HCT116 (cell line): ENCODE measurements at regions of chr9 and their contacts with region 1.

Region 1: DNA sequence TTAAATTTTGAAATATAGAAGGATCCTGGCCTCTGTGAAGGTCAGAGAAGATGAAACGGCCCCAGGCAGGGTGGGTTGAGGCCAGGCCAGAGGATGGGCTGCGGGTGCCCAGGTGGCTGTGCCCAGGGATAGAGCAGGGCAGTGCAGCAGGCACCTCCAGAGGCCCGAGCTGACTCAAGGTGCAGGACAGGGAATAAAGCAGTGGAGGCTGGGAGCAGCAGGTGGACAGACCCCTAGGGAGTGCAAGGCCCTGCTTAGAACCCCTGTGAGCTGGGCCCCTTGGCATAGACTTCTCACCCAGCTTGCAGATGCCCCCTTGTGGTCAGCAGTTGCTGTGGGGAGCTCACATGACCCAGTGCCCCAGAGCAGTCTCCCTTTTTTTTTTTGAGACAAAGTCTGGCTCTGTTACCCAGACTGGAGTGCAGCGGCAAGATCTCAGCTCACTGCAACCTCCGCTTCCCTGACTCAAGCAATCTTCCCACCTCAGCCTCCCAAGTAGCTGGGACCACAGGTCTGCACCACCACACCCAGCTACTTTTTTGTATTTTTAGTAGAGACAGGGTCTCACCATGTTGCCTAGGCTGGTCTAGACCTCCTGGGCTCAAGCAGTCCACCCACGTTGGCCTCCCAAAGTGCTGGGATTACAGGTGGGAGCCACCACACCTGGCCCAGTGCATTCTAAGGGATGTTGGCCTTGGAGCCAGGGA is 118.8 kb downstream of the WNK2 start:
- DNase-seq: peak; percentile 42
- ATAC-seq: peak; percentile 86
- H3K4me3 ChIP-seq: no peak overlapping the region
- H3K27ac ChIP-seq: no peak overlapping the region
- H3K4me1 ChIP-seq: no peaks in the 10 kb centered on the region
- H3K27me3 ChIP-seq: no peaks in the 10 kb centered on the region
- CTCF ChIP-seq: peak; percentile 74 to 84 (median 81)
- POLR2A ChIP-seq: no peak
- RAD21 ChIP-seq: peak; percentile 86

Region 2: GRCh38 chr9:92728831-92729734 is 573.6 kb before region 1 on chr9:
- CTCF ChIA-PET with region 1: no interaction called
- POLR2A ChIA-PET with region 1: no interaction called
- RAD21 ChIA-PET with region 1: no interaction called
- intact Hi-C with region 1: no loop called
- DNase-seq: no peak
- ATAC-seq: peak; percentile 73
- H3K4me3 ChIP-seq: no peak overlapping the region
- H3K27ac ChIP-seq: no peak overlapping the region
- H3K4me1 ChIP-seq: no peaks in the 10 kb centered on the region
- H3K27me3 ChIP-seq: no peaks in the 10 kb centered on the region
- CTCF ChIP-seq: peak in 2 of 3 experiments; percentile 28 to 39; a peak in 3 of 6 replicates
- POLR2A ChIP-seq: no peak
- RAD21 ChIP-seq: peak; percentile 22; the same call in 1 of the 2 replicates

Region 3: GRCh38 chr9:92954049-92954861 is 348.4 kb before region 1 on chr9:
- CTCF ChIA-PET with region 1: no interaction called
- POLR2A ChIA-PET with region 1: no interaction called
- RAD21 ChIA-PET with region 1: no interaction called
- intact Hi-C with region 1: loop called (anchors 2 kb)
- DNase-seq: peak; percentile 44
- ATAC-seq: peak; percentile 79
- H3K4me3 ChIP-seq: peak overlapping the region in 1 of 2 experiments; percentile 38; a peak in 2 of 4 replicates
- H3K27ac ChIP-seq: peak overlapping the region; percentile 27; the same call in 1 of the 2 replicates
- H3K4me1 ChIP-seq: peaks cover 15 to 24% of the 10 kb centered on the region in 2 experiments; a peak in 3 of 4 replicates
- H3K27me3 ChIP-seq: no peaks in the 10 kb centered on the region
- CTCF ChIP-seq: no peak
- POLR2A ChIP-seq: no peak
- RAD21 ChIP-seq: no peak

Region 4: DNA sequence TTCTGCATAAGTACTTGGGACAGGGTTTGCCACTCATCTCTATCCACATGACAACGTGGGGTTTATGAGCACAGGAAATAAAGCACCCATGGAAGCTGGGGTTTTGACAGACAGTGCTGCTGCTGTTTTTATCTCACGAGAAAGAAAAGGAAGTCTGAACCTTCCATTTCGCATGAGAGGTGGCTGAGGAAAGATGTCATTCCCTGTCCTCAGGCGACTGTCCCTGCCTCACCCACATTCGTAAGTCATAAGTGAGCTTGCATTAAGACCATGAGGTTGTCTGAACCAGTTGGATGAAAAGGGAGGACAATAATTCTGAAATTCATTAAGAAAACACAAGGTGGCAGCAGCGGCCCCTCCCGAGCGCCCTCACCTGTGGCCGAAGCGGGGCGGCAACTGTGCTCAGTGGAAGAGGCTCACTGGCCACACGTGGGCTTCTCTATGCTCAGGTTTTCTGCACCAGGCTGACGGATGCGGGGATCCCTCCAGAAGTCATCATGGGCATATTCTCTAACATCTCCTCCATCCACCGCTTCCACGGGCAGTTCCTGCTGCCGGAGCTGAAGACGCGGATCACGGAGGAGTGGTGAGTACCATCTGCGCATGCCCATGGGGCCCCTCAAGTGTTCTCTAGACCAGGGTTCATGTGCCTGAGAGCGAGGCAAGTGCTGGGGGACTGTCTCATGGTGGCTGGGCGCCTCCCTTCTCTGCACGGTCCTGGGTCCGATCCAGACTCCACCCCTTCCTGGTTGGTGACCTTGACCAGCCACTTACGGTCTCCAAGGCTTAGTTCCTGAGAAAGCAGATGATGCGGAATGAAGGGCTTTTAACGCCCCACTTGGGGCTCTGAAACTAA is 298.9 kb before region 1 on chr9:
- CTCF ChIA-PET with region 1: interaction called, 10 read pairs
- POLR2A ChIA-PET with region 1: no interaction called
- RAD21 ChIA-PET with region 1: no interaction called
- intact Hi-C with region 1: no loop called
- DNase-seq: peak; percentile 73
- ATAC-seq: peak; percentile 94
- H3K4me3 ChIP-seq: peak overlapping the region; percentile 49 to 60
- H3K27ac ChIP-seq: peak overlapping the region; percentile 47; the same call in 1 of the 2 replicates
- H3K4me1 ChIP-seq: peaks cover 10 to 18% of the 10 kb centered on the region in 2 experiments; a peak in 3 of 4 replicates
- H3K27me3 ChIP-seq: no peaks in the 10 kb centered on the region
- CTCF ChIP-seq: peak; percentile 67 to 97 (median 82)
- POLR2A ChIP-seq: no peak
- RAD21 ChIP-seq: peak; percentile 94

Region 5: GRCh38 chr9:93108291-93109041 is 194.2 kb before region 1 on chr9:
- CTCF ChIA-PET with region 1: interaction called, 13 read pairs
- POLR2A ChIA-PET with region 1: no interaction called
- RAD21 ChIA-PET with region 1: interaction called in 1 of 2 experiments, 4 read pairs
- intact Hi-C with region 1: loop called (anchors 2 kb)
- DNase-seq: no peak
- ATAC-seq: peak; percentile 51
- H3K4me3 ChIP-seq: no peak overlapping the region
- H3K27ac ChIP-seq: peak overlapping the region; percentile 23; the same call in 1 of the 2 replicates
- H3K4me1 ChIP-seq: peaks cover 0 to 18% of the 10 kb centered on the region in 2 experiments; a peak in 2 of 4 replicates
- H3K27me3 ChIP-seq: no peaks in the 10 kb centered on the region
- CTCF ChIP-seq: no peak
- POLR2A ChIP-seq: no peak
- RAD21 ChIP-seq: no peak

Region 6: GRCh38 chr9:93154315-93154903 is 148.3 kb before region 1 on chr9:
- CTCF ChIA-PET with region 1: interaction called, 10 read pairs
- POLR2A ChIA-PET with region 1: no interaction called
- RAD21 ChIA-PET with region 1: interaction called, 3 to 7 read pairs
- intact Hi-C with region 1: no loop called
- DNase-seq: no peak
- ATAC-seq: peak; percentile 89
- H3K4me3 ChIP-seq: no peak overlapping the region
- H3K27ac ChIP-seq: no peak overlapping the region
- H3K4me1 ChIP-seq: peaks cover 0 to 2% of the 10 kb centered on the region in 2 experiments; a peak in 3 of 4 replicates
- H3K27me3 ChIP-seq: no peaks in the 10 kb centered on the region
- CTCF ChIP-seq: peak; percentile 67 to 93 (median 93); a peak in 5 of 6 replicates
- POLR2A ChIP-seq: no peak
- RAD21 ChIP-seq: peak; percentile 70

Region 7: DNA sequence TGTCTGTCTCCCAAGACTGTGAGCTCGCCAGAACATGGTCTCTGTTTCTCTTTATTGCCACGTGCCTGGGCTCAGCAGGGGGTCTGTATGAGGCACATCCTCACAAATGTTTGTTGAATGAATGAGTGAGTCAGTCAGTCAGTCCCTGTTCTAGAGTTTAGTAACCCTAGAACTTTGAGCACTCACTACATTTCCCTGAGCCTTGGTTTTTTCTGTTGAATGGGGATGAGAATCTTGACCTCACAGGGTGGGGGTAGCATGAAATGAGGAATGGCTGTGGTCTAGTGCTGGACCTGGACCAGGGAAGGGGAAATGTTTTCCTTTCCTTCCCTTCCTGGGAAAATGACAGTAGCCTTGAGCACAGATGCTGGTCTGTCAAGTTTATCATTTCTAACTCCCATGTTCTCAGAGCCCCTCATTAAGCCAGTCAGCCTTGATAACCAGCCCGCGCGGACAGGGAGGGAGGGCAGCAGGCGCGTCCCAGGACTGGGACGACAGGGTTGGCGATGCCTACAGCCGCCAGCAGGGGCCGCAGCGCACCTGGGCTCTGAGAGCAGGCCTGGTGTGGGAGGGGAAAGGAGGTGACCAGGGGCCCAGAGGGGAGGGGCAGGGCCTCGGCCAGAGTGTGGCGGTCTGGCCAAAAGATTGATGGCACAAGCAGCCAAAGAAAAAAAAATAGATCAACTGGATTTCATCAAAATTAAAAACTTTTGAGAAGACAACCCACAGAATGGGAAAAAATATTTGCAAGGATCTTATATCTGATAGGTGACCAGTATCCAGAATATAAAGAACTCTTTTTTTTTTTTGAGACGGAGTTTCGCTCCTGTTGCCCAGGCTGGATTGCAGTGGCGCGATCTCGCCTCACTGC is 142.9 kb before region 1 on chr9:
- CTCF ChIA-PET with region 1: interaction called, 10 read pairs
- POLR2A ChIA-PET with region 1: no interaction called
- RAD21 ChIA-PET with region 1: interaction called in 1 of 2 experiments, 5 read pairs
- intact Hi-C with region 1: loop called (anchors 1 kb)
- DNase-seq: peak; percentile 67
- ATAC-seq: peak; percentile 100
- H3K4me3 ChIP-seq: peak overlapping the region in 1 of 2 experiments; percentile 36; a peak in 2 of 4 replicates
- H3K27ac ChIP-seq: no peak overlapping the region
- H3K4me1 ChIP-seq: peaks cover 3 to 7% of the 10 kb centered on the region in 2 experiments; a peak in 3 of 4 replicates
- H3K27me3 ChIP-seq: no peaks in the 10 kb centered on the region
- CTCF ChIP-seq: peak; percentile 98 to 99 (median 99)
- POLR2A ChIP-seq: no peak
- RAD21 ChIP-seq: peak; percentile 100

Region 8: DNA sequence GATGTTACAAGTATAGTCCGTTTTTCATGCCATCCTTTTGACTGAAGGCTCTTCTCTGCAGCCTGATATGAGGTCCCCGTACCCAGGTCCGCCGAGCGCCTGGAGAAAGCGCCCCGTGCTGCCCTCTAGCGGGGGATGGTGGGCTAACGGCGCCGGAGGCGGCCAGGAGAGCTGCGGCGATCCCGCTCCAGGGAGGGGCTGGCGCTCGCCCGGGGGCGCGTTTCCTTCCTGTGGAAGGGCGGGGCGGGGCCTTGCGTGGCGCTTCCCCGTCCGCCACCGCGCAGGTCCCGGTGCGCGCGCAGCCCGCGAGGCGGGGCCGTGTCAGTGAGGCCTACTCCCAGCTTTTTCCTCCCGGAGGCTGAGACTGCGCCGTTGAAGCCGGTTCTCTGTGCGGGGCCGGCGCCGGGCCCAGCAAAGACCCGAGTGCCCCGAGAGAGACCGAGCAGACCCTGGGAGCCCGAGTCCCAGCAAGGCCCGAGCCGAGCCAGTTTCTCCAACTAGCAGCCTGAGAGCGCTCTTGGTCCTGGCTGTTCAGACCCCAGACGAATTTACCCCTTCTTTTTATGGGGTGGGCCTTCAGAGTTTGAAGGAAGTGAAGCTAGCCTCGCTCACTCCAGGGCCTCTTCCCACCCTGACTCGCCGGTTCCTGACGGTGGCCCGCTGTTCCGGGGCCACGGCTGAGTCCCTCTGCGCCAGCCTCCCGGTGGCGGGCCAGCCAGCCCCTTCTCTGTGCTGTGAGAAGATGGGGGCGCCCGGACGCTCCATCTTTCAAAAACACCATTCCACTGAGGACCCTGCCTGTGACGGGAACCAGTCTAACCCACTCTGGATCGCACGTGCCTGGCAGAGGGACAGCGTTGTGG is 263.9 kb after region 1 on chr9:
- CTCF ChIA-PET with region 1: no interaction called
- POLR2A ChIA-PET with region 1: no interaction called
- RAD21 ChIA-PET with region 1: interaction called in 1 of 2 experiments, 3 read pairs
- intact Hi-C with region 1: loop called (anchors 10 kb)
- DNase-seq: peak; percentile 86
- ATAC-seq: peak; percentile 98
- H3K4me3 ChIP-seq: peak overlapping the region; percentile 67 to 70
- H3K27ac ChIP-seq: peak overlapping the region; percentile 74
- H3K4me1 ChIP-seq: peaks cover 4 to 12% of the 10 kb centered on the region in 2 experiments; a peak in 2 of 4 replicates
- H3K27me3 ChIP-seq: no peaks in the 10 kb centered on the region
- CTCF ChIP-seq: peak; percentile 74 to 93 (median 87)
- POLR2A ChIP-seq: peak; percentile 22
- RAD21 ChIP-seq: peak; percentile 80